ENCODE measurements at regions of chr2 and their contacts with region 1.

Region 1: DNA sequence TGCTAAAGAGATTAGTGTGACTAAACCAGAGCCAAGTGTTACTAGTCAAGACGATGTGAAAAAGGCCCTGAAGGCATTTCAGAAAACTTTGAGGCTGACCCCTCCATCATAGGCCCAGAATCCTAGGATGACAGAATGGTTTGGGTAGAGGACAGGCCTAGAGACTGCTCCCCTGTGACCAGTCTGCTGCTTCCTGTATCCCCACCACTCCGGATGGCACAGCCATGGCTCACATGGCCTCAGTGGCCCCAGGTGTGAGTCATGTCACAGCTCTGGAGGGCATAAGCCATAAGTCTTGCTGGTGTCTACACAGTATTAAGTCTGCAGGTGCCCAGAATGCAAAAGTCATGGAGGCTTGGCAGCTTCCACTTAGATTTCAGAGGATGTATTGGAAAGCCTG is 12.4 kb upstream of the STAT1 start:
- DNase-seq: no peak
- ATAC-seq: no peak
- H3K4me3 ChIP-seq: no peak overlapping the region
- H3K27ac ChIP-seq: no peak overlapping the region
- H3K4me1 ChIP-seq: peaks cover 17% of the 10 kb centered on the region
- H3K27me3 ChIP-seq: no peaks in the 10 kb centered on the region
- CTCF ChIP-seq: no peak

Region 2: DNA sequence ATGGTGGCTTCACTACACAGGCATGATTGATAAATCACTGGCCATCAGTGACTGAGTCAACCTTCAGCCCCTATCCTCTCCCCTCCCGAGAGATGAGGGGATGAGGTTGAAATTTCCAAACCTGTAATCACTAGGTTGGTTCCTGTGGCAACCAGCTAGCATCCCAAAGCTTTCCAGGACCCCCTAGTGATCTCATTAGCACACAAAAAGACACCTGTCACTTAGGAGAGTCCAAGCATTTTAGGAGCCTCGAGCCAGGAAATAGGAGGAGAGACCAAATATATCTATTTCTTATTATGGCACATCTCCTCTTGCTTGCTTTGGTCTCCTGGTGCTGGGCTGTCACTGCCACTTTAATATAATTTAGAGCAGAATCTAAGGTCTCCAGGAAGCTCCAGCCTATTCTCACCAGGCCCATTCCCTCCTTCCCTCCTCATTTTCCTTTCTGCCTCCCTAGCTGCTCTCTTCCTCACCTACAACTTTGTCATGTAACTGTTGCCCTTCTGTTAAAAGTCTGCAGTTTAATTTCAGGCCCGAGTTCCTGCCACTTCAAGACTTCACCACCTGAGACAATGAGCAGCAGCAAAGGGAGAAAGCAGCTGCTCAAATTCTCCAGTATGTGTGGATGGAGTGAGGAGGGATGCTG is 410.7 kb before region 1 on chr2:
- intact Hi-C with region 1: no loop called
- DNase-seq: no peak
- ATAC-seq: no peak
- H3K4me3 ChIP-seq: no peak overlapping the region
- H3K27ac ChIP-seq: no peak overlapping the region
- H3K4me1 ChIP-seq: no peaks in the 10 kb centered on the region
- H3K27me3 ChIP-seq: no peaks in the 10 kb centered on the region
- CTCF ChIP-seq: no peak

Region 3: GRCh38 chr2:190781604-190782198 is 244.7 kb before region 1 on chr2:
- intact Hi-C with region 1: loop called (anchors 5 kb)
- DNase-seq: no peak
- ATAC-seq: peak; percentile 81
- H3K4me3 ChIP-seq: no peak overlapping the region
- H3K27ac ChIP-seq: no peak overlapping the region
- H3K4me1 ChIP-seq: peaks cover 5% of the 10 kb centered on the region
- H3K27me3 ChIP-seq: no peaks in the 10 kb centered on the region
- CTCF ChIP-seq: peak; percentile 67